Calu3 (cell line): ENCODE measurements at regions of chr7 and their contacts with region 1.

Region 1: DNA sequence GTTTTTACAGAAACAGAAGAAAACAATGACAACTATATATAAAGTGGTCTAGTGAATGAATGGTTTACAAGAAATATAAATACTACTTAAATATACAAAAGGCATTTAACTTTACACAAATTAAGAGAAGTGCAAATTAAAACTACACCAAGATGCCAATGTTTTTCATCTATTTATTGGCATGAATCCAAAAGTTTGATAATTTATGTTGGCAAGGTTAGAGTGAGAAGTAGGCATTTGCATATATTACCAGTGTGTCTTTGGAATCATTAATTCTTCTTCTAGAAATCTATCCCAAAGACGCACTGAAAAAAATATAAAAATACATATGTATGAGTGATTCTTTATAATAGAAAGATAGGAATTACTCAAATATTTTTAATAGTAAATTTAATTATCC is 457.4 kb downstream of the MDFIC start:
- DNase-seq: no peak
- H3K4me3 Mint-ChIP-seq: no peak overlapping the region
- H3K27ac Mint-ChIP-seq: no peak overlapping the region
- H3K4me1 Mint-ChIP-seq: no peaks in the 10 kb centered on the region
- H3K27me3 Mint-ChIP-seq: no peaks in the 10 kb centered on the region
- CTCF ChIP-seq: no peak

Region 2: DNA sequence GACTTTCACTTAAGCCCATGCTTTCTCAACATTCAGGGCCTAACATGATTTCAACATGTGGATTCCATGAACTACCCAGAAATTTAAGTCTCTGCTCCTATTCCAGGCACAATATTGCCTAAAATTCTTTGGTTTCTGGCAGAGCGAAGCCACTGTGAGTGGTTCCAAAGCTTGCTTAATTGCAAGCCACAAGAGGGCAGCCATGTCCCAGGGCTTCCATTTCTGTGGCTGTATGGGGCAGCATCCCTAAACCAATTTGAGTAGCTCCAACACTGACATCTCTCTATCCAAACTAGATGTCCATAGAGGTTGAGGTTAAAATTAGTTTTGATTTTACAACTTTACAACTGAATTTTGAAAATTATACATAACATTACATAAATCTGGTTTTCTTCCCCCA is 513.8 kb before region 1 on chr7:
- CTCF ChIA-PET with region 1: no interaction called
- intact Hi-C with region 1: loop called (anchors 10 kb)
- DNase-seq: peak; percentile 63
- H3K4me3 Mint-ChIP-seq: no peak overlapping the region
- H3K27ac Mint-ChIP-seq: no peak overlapping the region
- H3K4me1 Mint-ChIP-seq: peaks cover 9% of the 10 kb centered on the region
- H3K27me3 Mint-ChIP-seq: no peaks in the 10 kb centered on the region
- CTCF ChIP-seq: peak; percentile 47